Activated CD4-positive, alpha-beta memory T cell treated with anti-CD3 and anti-CD28 coated beads, Interleukin-2, amount 10 ng/mL, durations not matched to agents 7 days and 5 days (primary cell): ENCODE measurements at regions of chr9 and their contacts with region 1.

Region 1: GRCh38 chr9:91245431-91246313 is 116.0 kb downstream of the AUH start:
- DNase-seq: no peak
- H3K4me3 Mint-ChIP-seq: no peak overlapping the region
- H3K27ac Mint-ChIP-seq: peak overlapping the region; percentile 56
- H3K4me1 Mint-ChIP-seq: peaks cover 48% of the 10 kb centered on the region
- H3K27me3 Mint-ChIP-seq: no peaks in the 10 kb centered on the region

Region 2: DNA sequence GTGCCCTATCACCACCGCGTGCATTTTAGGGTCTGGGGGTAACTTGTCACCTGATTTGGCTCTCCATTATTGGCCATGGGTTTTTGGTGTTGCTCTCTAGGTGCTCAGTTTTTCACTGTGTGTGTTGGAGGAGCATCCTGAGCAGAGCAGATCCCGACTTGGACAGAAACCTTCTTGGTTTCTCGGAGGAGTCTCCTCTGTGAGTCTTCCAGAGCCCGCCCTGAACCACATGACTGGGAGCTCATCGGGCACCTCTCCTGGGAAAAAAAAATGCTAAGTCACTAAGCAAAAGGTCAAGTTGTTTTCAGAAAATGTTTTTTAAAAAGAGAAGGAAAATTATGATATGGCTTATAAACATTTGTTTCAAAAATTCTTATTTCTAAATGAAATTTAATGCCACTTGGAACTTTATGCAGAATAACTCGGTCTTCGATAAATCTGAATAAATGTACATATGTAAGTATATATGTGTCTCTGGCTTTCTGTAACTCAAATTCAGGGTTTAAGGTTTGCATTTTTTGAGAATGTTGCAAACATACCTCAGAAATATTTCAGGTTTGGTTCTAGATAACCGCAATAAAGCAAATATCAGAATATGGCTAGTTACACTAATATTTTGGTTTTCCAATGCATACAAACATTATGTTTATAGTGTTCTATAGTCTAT is 139.1 kb before region 1 on chr9:
- CTCF ChIA-PET with region 1: no interaction called
- POLR2A ChIA-PET with region 1: no interaction called
- DNase-seq: no peak
- H3K4me3 Mint-ChIP-seq: no peak overlapping the region
- H3K27ac Mint-ChIP-seq: no peak overlapping the region
- H3K4me1 Mint-ChIP-seq: peaks cover 56% of the 10 kb centered on the region
- H3K27me3 Mint-ChIP-seq: no peaks in the 10 kb centered on the region

Region 3: DNA sequence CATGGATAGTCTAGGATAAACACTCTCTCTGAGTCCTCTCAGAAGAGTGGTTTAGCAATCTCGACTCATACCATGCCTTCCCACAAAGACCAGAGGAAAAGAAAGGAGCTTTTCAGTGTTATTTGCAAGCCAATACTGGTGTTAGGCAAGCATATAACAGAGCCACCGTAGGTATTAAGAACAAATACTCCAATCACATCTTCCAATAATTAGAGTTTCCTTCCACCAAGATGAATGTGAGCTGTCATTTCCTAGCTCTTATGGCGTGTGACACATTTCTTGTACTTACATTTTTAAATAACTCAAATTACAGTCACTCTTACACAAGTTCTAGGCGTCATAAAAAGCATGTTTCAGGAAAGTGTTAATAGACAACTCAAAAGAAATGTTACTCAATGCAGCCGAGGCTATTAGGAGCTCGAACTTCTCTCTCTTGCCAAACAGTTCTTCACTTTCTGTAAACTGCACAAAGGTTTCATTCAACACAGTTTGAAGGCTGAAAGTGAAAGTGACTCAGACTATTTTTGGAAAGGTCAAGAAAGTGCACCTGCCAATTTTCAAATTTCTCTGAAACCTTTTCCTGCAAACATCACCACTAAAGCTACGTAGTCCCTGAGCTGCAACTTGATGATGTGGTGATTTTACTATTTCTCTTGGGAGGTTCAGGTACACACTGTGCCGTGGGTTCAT is 37.8 kb before region 1 on chr9:
- CTCF ChIA-PET with region 1: no interaction called
- POLR2A ChIA-PET with region 1: interaction called, 11 read pairs
- DNase-seq: no peak
- H3K4me3 Mint-ChIP-seq: peak overlapping the region; percentile 58
- H3K27ac Mint-ChIP-seq: peak overlapping the region; percentile 86
- H3K4me1 Mint-ChIP-seq: peaks cover 57% of the 10 kb centered on the region
- H3K27me3 Mint-ChIP-seq: no peaks in the 10 kb centered on the region

Region 4: GRCh38 chr9:91266448-91266847 is 20.8 kb after region 1 on chr9:
- CTCF ChIA-PET with region 1: no interaction called
- POLR2A ChIA-PET with region 1: no interaction called
- DNase-seq: no peak
- H3K4me3 Mint-ChIP-seq: no peak overlapping the region
- H3K27ac Mint-ChIP-seq: no peak overlapping the region
- H3K4me1 Mint-ChIP-seq: peaks cover 6% of the 10 kb centered on the region
- H3K27me3 Mint-ChIP-seq: no peaks in the 10 kb centered on the region